ENCODE measurements at regions of chr4 and their contacts with region 1.

Region 1: GRCh38 chr4:105715692-105716278 is 7.2 kb downstream of the GSTCD start:
- DNase-seq: peak; percentile 64
- H3K4me3 ChIP-seq: no peak overlapping the region
- H3K27ac ChIP-seq: no peak overlapping the region
- H3K4me1 ChIP-seq: no peaks in the 10 kb centered on the region
- H3K27me3 ChIP-seq: no peaks in the 10 kb centered on the region
- CTCF ChIP-seq: peak; percentile 12 to 27
- POLR2A ChIP-seq: no peak

Region 2: GRCh38 chr4:105140684-105141490 is 574.9 kb before region 1 on chr4:
- CTCF ChIA-PET with region 1: interaction called, 11 read pairs
- POLR2A ChIA-PET with region 1: no interaction called
- dilution Hi-C with region 1: no loop called
- intact Hi-C with region 1: no loop called
- DNase-seq: peak; percentile 50
- H3K4me3 ChIP-seq: no peak overlapping the region
- H3K27ac ChIP-seq: no peak overlapping the region
- H3K4me1 ChIP-seq: peaks cover 4% of the 10 kb centered on the region
- H3K27me3 ChIP-seq: no peaks in the 10 kb centered on the region
- CTCF ChIP-seq: peak; percentile 51 to 56
- POLR2A ChIP-seq: no peak

Region 3: GRCh38 chr4:106062452-106062875 is 346.7 kb after region 1 on chr4:
- CTCF ChIA-PET with region 1: interaction called, 3 read pairs
- POLR2A ChIA-PET with region 1: no interaction called
- dilution Hi-C with region 1: no loop called
- intact Hi-C with region 1: loop called (anchors 10 kb)
- DNase-seq: peak; percentile 82
- H3K4me3 ChIP-seq: no peak overlapping the region
- H3K27ac ChIP-seq: no peak overlapping the region
- H3K4me1 ChIP-seq: peaks cover 15% of the 10 kb centered on the region
- H3K27me3 ChIP-seq: no peaks in the 10 kb centered on the region
- CTCF ChIP-seq: no peak
- POLR2A ChIP-seq: no peak

Region 4: GRCh38 chr4:106201373-106201772 is 485.6 kb after region 1 on chr4:
- CTCF ChIA-PET with region 1: interaction called, 26 read pairs
- POLR2A ChIA-PET with region 1: no interaction called
- dilution Hi-C with region 1: no loop called
- intact Hi-C with region 1: loop called (anchors 2 kb)
- DNase-seq: peak; percentile 31
- H3K4me3 ChIP-seq: no peak overlapping the region
- H3K27ac ChIP-seq: no peak overlapping the region
- H3K4me1 ChIP-seq: no peaks in the 10 kb centered on the region
- H3K27me3 ChIP-seq: no peaks in the 10 kb centered on the region
- CTCF ChIP-seq: peak; percentile 26 to 35
- POLR2A ChIP-seq: no peak

Measured in endothelial cell of umbilical vein (primary cell).